ENCODE measurements at regions of chr14 and their contacts with region 1.

Region 1: DNA sequence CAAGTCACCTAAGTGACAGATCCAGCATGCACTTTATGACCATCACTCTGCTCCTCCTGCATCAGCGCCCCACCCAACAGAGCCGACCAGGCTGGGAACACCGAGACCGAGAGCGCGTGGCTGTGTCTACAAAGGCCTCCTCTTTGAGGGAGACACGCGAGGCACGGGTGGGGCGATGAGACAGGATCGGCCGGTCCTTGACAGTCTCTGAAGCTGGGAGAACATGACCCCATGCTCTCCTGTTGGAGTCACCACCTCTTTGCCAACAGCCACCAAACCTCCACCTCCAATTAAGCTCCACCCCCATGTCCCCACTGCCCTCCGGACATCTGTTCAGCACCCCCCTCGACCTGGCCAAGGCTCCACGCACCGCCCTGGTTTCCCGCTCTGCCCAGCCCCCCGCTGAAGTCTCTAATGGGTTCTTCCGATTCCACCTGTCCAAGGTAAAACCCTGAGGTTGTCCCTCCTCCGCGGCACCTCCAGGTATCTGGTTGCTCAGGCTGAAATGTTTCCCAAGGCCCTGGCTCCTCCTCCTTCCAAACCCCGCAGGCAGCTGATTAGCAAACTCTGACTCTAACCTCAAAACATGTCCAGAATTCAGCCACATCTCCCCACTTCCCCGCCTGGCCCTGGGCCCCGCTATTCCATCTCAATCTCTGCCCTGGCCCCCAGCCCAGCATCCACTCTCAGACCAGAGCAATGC is 31.5 kb downstream of the HSP90AA1 start:
- DNase-seq: no peak
- ATAC-seq: peak in 3 of 4 donors; percentile 13 to 18 (median 17)
- H3K4me3 ChIP-seq: no peak overlapping the region
- H3K27ac ChIP-seq: no peak overlapping the region
- H3K4me1 ChIP-seq: no peaks in the 10 kb centered on the region
- H3K27me3 ChIP-seq: no peaks in the 10 kb centered on the region
- CTCF ChIP-seq: no peak
- POLR2A ChIP-seq: no peak

Region 2: GRCh38 chr14:101964297-101965144 is 90.8 kb before region 1 on chr14 and contains the start of gene DYNC1H1:
- intact Hi-C with region 1: no loop called
- DNase-seq: peak; percentile 94 to 96 (median 96)
- ATAC-seq: peak; percentile 84 to 94 (median 90)
- H3K4me3 ChIP-seq: peak within 1 kb of the TSS; percentile 97 to 99 (median 98)
- H3K27ac ChIP-seq: peak within 1 kb of the TSS; percentile 85 to 93 (median 86)
- H3K4me1 ChIP-seq: peaks cover 0 to 32% (median 6%) of the 10 kb centered on the region in 4 donors
- H3K27me3 ChIP-seq: no peaks in the 10 kb centered on the region
- CTCF ChIP-seq: no peak
- POLR2A ChIP-seq: peak; percentile 99
- total RNA-seq, gene DYNC1H1: 116 to 261 (median 161) TPM

Region 3: DNA sequence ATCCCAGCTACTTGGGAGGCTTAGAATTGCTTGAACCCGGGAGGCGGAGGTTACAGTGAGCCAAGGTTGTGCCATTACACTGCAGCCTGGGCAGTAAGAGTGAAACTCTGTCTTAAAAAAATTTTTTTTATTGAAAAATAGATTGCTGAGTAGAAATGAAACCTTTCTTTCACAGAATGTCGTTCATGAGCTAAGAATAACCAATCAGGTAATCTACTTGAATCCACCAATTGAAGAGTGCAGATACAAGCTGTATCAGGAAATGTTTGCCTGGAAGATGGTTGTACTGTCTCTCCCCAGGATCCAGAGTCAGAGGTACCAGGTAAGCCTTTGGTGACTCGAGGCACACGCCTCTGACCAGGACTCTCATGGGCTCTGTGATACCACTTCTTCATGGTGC is 64.0 kb before region 1 on chr14:
- intact Hi-C with region 1: no loop called
- DNase-seq: no peak
- ATAC-seq: no peak
- H3K4me3 ChIP-seq: no peak overlapping the region
- H3K27ac ChIP-seq: no peak overlapping the region
- H3K4me1 ChIP-seq: no peaks in the 10 kb centered on the region
- H3K27me3 ChIP-seq: no peaks in the 10 kb centered on the region
- CTCF ChIP-seq: no peak
- POLR2A ChIP-seq: no peak

Region 4: DNA sequence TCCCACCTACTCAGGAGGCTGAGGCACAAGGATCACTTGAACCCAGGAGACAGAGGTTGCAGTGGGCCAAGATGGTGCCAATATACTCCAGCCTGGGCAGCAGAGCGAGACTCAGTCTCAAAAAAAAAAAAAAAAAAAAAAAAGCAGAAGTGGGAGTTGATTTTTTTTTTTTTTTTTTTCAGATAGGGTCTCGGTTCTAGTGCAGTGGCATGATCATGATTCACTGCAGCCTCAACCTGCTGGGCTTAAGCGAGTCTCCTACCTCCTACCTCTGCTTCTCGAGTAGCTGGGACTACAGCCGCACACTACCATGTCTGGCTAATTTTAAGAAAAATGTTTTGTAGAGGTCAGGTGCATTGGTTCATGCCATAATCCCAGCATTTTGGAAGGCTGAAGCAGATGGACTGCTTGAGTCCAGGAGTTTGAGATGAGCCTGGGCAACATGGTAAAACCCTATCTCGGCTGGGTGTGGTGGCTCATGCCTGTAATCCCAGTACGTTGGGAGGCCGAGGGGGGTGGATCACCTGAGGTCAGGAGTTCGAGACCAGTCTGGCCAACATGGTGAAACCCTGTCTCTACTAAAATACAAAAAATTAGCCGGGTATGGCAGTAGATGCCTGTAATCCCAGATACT is 47.8 kb after region 1 on chr14:
- intact Hi-C with region 1: loop called in 1 of 2 experiments (anchors 5 kb)
- DNase-seq: no peak
- ATAC-seq: no peak
- H3K4me3 ChIP-seq: no peak overlapping the region
- H3K27ac ChIP-seq: no peak overlapping the region
- H3K4me1 ChIP-seq: no peaks in the 10 kb centered on the region
- H3K27me3 ChIP-seq: no peaks in the 10 kb centered on the region
- CTCF ChIP-seq: no peak
- POLR2A ChIP-seq: no peak